Left ventricle myocardium inferior (tissue), 1 donor: ENCODE measurements at regions of chr20 and their contacts with region 1.

Region 1: GRCh38 chr20:2451939-2452732 is 18.5 kb downstream of the SNRPB start:
- DNase-seq: peak; percentile 42
- H3K4me3 ChIP-seq: no peak overlapping the region
- H3K27ac ChIP-seq: no peak overlapping the region
- H3K4me1 ChIP-seq: no peaks in the 10 kb centered on the region
- H3K27me3 ChIP-seq: no peaks in the 10 kb centered on the region
- CTCF ChIP-seq: peak; percentile 87

Region 2: GRCh38 chr20:2206957-2207769 is 245.0 kb before region 1 on chr20:
- intact Hi-C with region 1: loop called (anchors 5 kb)
- DNase-seq: peak; percentile 69
- H3K4me3 ChIP-seq: peak overlapping the region; percentile 65
- H3K27ac ChIP-seq: no peak overlapping the region
- H3K4me1 ChIP-seq: peaks cover 12% of the 10 kb centered on the region
- H3K27me3 ChIP-seq: peaks cover 71% of the 10 kb centered on the region
- CTCF ChIP-seq: peak; percentile 76

Region 3: GRCh38 chr20:2387180-2387577 is 65.0 kb before region 1 on chr20:
- intact Hi-C with region 1: no loop called
- DNase-seq: no peak
- H3K4me3 ChIP-seq: no peak overlapping the region
- H3K27ac ChIP-seq: no peak overlapping the region
- H3K4me1 ChIP-seq: no peaks in the 10 kb centered on the region
- H3K27me3 ChIP-seq: peaks cover 37% of the 10 kb centered on the region
- CTCF ChIP-seq: peak; percentile 28

Region 4: DNA sequence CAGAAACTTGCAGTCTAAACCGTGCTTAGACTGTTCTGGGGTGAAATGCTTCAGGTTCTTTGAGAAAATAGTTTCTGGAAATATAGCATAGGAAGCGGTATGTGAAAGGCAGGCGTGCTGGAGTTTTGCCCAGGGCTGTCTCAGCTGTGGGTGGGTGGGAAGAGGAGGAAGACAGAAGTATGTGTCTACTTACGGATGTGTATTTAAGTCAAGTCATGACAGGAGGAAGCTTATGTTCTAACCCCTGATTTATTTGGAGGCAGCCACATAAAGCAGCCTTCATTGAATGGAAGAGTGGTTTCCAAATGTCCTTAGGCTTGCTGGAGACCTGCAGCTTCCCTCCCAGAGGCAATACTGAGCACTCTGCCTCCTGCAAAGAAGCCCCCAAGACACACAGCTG is 1923.7 kb after region 1 on chr20:
- intact Hi-C with region 1: no loop called
- DNase-seq: no peak
- H3K4me3 ChIP-seq: no peak overlapping the region
- H3K27ac ChIP-seq: no peak overlapping the region
- H3K4me1 ChIP-seq: no peaks in the 10 kb centered on the region
- H3K27me3 ChIP-seq: peaks cover 7% of the 10 kb centered on the region
- CTCF ChIP-seq: no peak